PC-9 (cell line): ENCODE measurements at regions of chr20 and their contacts with region 1.

Region 1: GRCh38 chr20:24651171-24651975 is 181.9 kb downstream of the SYNDIG1 start:
- DNase-seq: peak; percentile 33 to 96
- H3K4me3 ChIP-seq: 0 out of 2 replicates have a peak overlapping the region, but pooled peaks have one; percentile 1
- H3K27ac ChIP-seq: peak overlapping the region; percentile 75
- H3K4me1 ChIP-seq: peaks cover 47% of the 10 kb centered on the region
- H3K27me3 ChIP-seq: no peaks in the 10 kb centered on the region
- CTCF ChIP-seq: no peak; the same call in 1 of the 2 replicates

Region 2: GRCh38 chr20:24477601-24478547 is 173.5 kb before region 1 on chr20:
- CTCF ChIA-PET with region 1: no interaction called
- POLR2A ChIA-PET with region 1: no interaction called
- intact Hi-C with region 1: no loop called
- DNase-seq: no peak
- H3K4me3 ChIP-seq: no peak overlapping the region
- H3K27ac ChIP-seq: no peak overlapping the region
- H3K4me1 ChIP-seq: no peaks in the 10 kb centered on the region
- H3K27me3 ChIP-seq: no peaks in the 10 kb centered on the region
- CTCF ChIP-seq: no peak

Region 3: DNA sequence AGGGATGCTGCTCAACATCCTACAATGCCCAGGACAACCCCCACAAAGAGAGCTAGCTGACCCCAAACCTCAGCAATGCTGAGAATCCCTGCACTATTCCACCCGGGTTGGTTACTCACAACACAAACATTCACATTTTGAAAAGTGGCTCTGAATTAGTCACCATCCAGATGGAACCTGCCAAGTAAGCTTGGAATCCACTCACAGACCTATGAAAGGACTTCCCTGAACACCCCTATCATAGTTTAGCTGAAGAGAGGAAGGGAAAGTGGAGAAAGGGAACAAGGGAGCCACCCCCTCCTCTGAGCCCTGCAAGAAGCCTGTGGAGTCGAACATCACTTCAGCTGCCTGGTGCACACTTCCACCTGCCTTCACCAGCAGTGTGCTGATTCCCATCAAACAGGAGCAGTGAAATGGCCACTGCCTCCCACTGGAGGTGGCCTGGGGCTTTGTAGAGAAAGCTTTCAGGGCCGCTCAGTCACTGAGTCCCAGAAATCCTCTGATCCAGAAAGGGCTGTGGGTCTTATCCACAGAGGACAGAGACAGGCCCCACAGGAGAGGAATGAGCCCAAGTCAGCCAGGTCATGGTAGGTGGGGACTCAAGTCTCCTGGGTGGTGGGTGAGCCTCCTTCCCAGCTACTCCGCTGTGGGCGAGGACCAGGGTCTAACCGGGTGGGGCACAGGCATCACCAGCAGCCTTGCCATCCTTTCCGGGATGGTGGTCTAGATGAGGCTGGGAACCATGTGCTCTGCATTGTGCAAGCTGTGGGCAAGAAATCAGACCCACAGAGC is 21.7 kb after region 1 on chr20:
- CTCF ChIA-PET with region 1: no interaction called
- POLR2A ChIA-PET with region 1: interaction called, 3 read pairs
- intact Hi-C with region 1: loop called (anchors 2 kb)
- DNase-seq: peak; percentile 64 to 92
- H3K4me3 ChIP-seq: no peak overlapping the region
- H3K27ac ChIP-seq: peak overlapping the region; percentile 64
- H3K4me1 ChIP-seq: peaks cover 23% of the 10 kb centered on the region
- H3K27me3 ChIP-seq: no peaks in the 10 kb centered on the region
- CTCF ChIP-seq: no peak

Region 4: DNA sequence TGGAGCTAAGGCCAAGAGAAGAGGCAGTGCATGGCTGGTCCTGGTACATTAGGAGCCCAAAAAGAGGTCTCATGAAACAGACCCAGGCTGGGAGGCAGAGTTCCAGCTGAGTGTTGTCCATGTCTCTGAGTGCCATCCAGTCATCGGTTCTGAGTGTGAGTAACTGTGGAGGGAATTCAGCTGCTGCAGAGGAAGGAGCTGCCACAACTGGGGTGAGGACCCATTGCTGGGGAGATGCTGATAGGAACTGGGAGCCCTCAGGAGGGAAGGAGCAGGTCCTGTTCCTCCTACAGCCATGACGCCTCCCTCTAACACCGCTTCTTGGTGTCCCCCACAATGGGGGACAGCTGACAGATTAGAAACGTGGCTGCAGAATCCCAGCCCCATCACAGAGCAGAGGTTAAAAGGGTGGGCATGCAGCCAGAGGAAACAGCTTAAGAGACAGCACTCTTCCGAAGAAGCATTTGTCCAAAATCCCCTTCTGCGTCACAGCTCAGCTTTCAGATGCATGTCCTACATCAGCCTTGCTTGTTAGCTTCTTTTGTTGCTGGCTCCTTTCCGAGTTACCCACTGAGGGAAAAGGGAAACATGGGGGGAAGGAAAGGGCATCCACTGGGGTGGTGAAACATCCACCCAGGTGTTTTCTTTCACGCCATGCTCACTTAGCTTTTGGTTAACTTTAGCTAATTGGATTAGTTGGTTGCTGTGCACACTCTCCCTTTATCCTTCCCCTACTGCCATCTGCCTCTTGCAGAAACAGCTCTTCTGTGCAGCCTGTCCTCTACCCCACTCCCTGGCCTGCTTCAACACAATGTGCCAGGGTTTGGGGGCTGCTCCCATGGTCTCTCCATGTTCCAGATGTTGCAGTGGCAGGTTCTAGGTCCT is 57.3 kb after region 1 on chr20:
- CTCF ChIA-PET with region 1: no interaction called
- POLR2A ChIA-PET with region 1: no interaction called
- intact Hi-C with region 1: no loop called
- DNase-seq: no peak
- H3K4me3 ChIP-seq: no peak overlapping the region
- H3K27ac ChIP-seq: no peak overlapping the region
- H3K4me1 ChIP-seq: no peaks in the 10 kb centered on the region
- H3K27me3 ChIP-seq: no peaks in the 10 kb centered on the region
- CTCF ChIP-seq: no peak

Region 5: DNA sequence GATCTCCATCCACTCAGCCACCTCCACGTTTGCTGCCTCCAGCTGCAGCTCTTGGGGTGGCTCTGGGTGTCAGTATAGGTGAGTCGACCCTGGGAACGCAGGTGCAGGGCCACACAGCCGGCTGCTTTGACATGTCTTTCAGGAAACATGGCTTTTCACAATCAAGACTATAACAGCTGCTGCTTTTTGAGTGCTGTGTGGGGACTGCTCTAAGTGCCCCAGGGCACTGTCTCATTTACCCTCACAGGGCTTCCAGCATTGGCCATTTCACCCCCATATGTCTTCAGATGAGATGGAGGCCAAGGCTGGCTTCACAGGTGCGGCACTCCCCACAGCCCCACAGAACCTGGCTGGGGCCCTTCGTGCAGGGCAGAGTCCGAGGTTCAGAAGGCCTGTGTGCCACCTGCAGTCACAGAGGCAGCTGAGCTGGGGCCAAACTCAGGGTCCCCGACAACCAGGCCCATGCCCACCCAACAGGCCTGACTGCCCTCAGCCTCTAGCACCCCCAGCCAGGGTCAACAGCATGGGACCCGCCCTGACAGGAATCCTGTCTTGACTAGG is 282.8 kb after region 1 on chr20:
- CTCF ChIA-PET with region 1: no interaction called
- POLR2A ChIA-PET with region 1: no interaction called
- intact Hi-C with region 1: no loop called
- DNase-seq: no peak
- H3K4me3 ChIP-seq: no peak overlapping the region
- H3K27ac ChIP-seq: no peak overlapping the region
- H3K4me1 ChIP-seq: peaks cover 27% of the 10 kb centered on the region
- H3K27me3 ChIP-seq: no peaks in the 10 kb centered on the region
- CTCF ChIP-seq: no peak